Activated CD8-positive, alpha-beta T cell treated with anti-CD3 and anti-CD28 coated beads for 36 hours (primary cell): ENCODE measurements at regions of chr1 and their contacts with region 1.

Region 1: DNA sequence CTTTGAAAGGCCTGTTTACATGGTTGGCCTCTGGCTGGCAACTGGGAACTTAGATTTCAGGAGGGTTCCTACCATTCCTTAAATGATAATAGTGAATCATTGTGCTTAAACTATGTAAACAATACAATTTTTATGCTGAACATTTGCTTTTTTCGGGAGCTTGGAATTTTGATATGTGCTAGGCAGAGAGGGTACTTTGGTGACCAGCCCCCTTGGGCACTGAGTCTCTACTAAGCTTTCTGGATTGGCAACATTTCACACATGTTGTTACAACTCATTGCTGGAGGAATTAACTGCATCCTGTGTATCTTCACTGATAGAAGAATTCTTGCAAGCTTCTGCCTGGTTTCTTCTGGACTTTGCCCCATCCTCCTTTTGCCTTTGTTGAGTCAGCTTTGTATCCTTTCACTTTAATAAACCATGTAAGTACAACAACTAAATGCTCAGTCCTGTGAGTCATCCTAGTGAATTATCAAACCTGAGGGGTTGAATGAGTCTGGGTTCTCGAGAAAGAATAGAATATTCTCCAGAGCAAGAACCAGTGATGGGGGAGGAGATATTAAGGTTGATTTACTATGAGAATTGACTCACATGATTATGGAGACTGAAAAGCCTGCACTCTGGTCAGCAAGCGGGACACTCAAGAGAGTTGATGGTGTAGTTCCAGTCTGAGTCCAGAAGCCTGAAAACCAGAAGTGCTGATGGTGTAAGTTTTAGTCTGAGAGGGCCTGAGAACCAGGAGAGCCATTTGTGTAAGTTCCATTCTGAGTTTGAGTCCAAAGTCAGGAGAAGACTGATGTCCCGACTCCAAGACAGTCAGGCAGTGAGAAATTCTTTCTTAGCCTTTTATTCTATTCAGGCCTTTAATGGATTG is 3.1 kb upstream of the SLC16A4 start:
- DNase-seq: no peak
- ATAC-seq: no peak
- H3K4me3 Mint-ChIP-seq: no peak overlapping the region
- H3K27ac Mint-ChIP-seq: no peak overlapping the region
- H3K4me1 Mint-ChIP-seq: peaks cover 4% of the 10 kb centered on the region
- H3K27me3 Mint-ChIP-seq: no peaks in the 10 kb centered on the region
- CTCF ChIP-seq: no peak

Region 2: DNA sequence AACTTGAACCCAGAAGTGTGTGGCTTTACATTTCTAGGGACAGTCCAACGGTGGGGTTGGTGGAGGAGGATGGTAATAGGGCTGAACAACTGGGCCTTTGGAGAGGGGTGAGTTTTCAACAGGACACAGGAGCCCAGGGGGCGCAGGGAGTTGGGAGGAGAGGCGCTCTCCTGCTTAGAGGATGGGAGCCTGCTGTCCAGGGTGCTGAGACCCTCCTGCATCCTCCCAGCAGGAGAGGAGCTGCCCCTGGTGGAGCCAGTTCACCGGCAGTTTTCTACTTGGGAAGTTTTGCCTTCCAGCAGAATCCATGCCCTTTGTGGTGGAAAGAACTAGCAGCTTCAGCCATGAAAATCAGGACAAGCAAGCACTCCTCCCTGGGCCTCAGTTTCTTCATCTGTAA is 175.2 kb before region 1 on chr1:
- CTCF ChIA-PET with region 1: no interaction called
- POLR2A ChIA-PET with region 1: no interaction called
- intact Hi-C with region 1: no loop called
- DNase-seq: no peak
- ATAC-seq: no peak
- H3K4me3 Mint-ChIP-seq: no peak overlapping the region
- H3K27ac Mint-ChIP-seq: no peak overlapping the region
- H3K4me1 Mint-ChIP-seq: peaks cover 27% of the 10 kb centered on the region
- H3K27me3 Mint-ChIP-seq: no peaks in the 10 kb centered on the region
- CTCF ChIP-seq: no peak

Region 3: GRCh38 chr1:110272045-110272444 is 121.9 kb before region 1 on chr1:
- CTCF ChIA-PET with region 1: no interaction called
- POLR2A ChIA-PET with region 1: no interaction called
- intact Hi-C with region 1: no loop called
- DNase-seq: no peak
- ATAC-seq: no peak
- H3K4me3 Mint-ChIP-seq: no peak overlapping the region
- H3K27ac Mint-ChIP-seq: no peak overlapping the region
- H3K4me1 Mint-ChIP-seq: no peaks in the 10 kb centered on the region
- H3K27me3 Mint-ChIP-seq: peaks cover 6% of the 10 kb centered on the region
- CTCF ChIP-seq: no peak

Region 4: DNA sequence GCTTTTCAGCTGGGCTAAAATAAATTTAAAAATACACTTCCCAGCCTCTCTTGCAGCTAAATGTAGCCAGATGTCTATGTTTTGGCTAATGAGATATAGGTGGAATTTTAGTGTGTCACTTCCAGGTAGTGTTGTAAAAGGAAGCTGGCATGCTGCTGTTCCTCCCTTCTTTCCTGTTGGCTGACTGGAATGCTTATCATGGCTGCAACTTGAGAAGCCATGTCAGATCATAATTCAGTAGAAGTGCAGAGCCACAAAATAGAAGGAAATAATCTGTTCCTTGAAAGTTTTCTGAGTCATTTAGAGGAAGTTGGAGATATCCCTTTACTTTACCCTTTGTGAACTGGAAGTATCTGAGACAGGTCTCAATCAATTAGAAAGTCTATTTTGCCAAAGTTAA is 65.7 kb before region 1 on chr1:
- CTCF ChIA-PET with region 1: no interaction called
- POLR2A ChIA-PET with region 1: no interaction called
- intact Hi-C with region 1: no loop called
- DNase-seq: no peak
- ATAC-seq: no peak
- H3K4me3 Mint-ChIP-seq: no peak overlapping the region
- H3K27ac Mint-ChIP-seq: no peak overlapping the region
- H3K4me1 Mint-ChIP-seq: no peaks in the 10 kb centered on the region
- H3K27me3 Mint-ChIP-seq: no peaks in the 10 kb centered on the region
- CTCF ChIP-seq: no peak

Region 5: GRCh38 chr1:110412576-110412975 is 18.6 kb after region 1 on chr1:
- CTCF ChIA-PET with region 1: interaction called, 10 read pairs
- POLR2A ChIA-PET with region 1: no interaction called
- intact Hi-C with region 1: no loop called
- DNase-seq: peak; percentile 75
- ATAC-seq: peak; percentile 52
- H3K4me3 Mint-ChIP-seq: no peak overlapping the region
- H3K27ac Mint-ChIP-seq: no peak overlapping the region
- H3K4me1 Mint-ChIP-seq: peaks cover 10% of the 10 kb centered on the region
- H3K27me3 Mint-ChIP-seq: no peaks in the 10 kb centered on the region
- CTCF ChIP-seq: peak; percentile 72